PC-9 (cell line): ENCODE measurements at regions of chr3 and their contacts with region 1.

Region 1: GRCh38 chr3:168088106-168088720 is 7.5 kb downstream of the GOLIM4 start:
- DNase-seq: no peak
- H3K4me3 ChIP-seq: no peak overlapping the region
- H3K27ac ChIP-seq: no peak overlapping the region
- H3K4me1 ChIP-seq: 0 out of 2 replicates have a peak, but pooled peaks cover 14% of the 10 kb centered on the region
- H3K27me3 ChIP-seq: no peaks in the 10 kb centered on the region
- CTCF ChIP-seq: no peak; the same call in 1 of the 2 replicates

Region 2: DNA sequence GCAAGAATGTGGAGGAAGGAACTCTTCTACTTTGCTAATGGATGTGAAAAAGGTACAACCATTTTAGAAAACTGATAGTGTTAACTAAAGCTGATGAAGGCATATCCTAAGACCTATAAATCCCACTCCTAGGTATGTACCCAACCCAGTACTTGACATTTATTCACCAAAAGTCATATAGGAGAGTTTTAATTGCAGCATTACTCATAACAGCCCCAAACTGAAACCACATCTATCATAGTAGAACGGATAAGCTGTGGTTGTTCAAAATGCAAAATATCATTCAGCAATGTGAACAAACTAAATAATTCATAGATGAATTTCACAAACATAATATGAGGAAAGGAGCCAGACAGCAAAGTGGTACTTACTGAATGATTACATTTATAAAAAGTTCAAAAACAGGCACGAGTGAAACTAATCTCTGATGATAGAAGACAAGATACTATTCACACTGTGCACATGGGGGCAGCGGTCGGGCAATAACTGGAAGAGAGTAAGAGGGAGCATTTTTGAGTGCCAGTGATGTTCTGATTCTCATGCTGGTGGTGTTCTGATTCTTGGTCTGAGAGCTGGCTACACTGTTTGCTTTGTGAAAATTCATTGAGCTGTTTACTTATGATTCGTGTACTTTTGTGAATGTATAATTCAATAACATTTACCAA is 26.7 kb before region 1 on chr3:
- CTCF ChIA-PET with region 1: interaction called, 4 read pairs
- POLR2A ChIA-PET with region 1: no interaction called
- intact Hi-C with region 1: loop called (anchors 1 kb)
- DNase-seq: no peak
- H3K4me3 ChIP-seq: no peak overlapping the region
- H3K27ac ChIP-seq: no peak overlapping the region
- H3K4me1 ChIP-seq: no peaks in the 10 kb centered on the region
- H3K27me3 ChIP-seq: no peaks in the 10 kb centered on the region
- CTCF ChIP-seq: no peak

Region 3: DNA sequence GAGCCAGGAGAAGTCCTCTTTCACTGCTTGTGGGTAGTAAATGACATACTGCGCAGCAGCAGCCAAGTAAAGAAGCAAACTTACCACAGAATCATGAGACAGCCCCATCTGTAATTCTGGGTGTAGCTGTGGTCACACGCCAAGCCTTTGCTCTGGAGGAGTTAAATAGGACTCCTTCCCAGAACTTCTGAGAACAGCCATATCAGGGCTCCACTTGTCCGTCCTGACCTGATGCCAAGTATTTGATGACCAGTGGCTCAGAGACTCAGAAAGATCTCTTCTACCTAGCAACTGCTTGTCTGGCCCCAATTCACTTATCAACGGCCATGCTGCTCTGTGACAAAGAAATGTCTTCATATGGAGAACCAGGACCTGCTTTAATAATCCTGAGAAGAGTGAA is 28.1 kb after region 1 on chr3:
- CTCF ChIA-PET with region 1: interaction called, 11 read pairs
- POLR2A ChIA-PET with region 1: no interaction called
- intact Hi-C with region 1: no loop called
- DNase-seq: no peak
- H3K4me3 ChIP-seq: no peak overlapping the region
- H3K27ac ChIP-seq: no peak overlapping the region
- H3K4me1 ChIP-seq: no peaks in the 10 kb centered on the region; the same call in 1 of the 2 replicates
- H3K27me3 ChIP-seq: no peaks in the 10 kb centered on the region
- CTCF ChIP-seq: no peak

Region 4: DNA sequence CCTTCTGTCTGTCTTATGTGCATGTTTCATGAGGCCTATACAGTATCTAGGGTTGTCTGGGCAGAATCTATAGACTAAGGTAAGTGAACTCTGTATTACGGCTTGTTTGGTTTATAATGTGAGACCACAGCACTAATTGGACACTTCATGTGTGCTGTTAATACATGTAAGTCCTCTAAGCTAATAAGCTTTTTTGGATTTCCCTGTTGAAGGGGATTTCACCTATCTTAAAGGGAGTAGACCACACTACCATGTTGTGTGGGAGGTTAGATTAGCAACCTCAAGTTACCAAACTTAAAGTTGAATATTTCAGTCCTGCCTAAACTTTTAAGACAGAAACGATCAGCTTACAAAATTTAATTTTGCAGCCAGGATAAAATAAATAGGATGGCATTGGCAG is 197.3 kb after region 1 on chr3:
- CTCF ChIA-PET with region 1: no interaction called
- POLR2A ChIA-PET with region 1: no interaction called
- intact Hi-C with region 1: no loop called
- DNase-seq: no peak
- H3K4me3 ChIP-seq: no peak overlapping the region
- H3K27ac ChIP-seq: no peak overlapping the region
- H3K4me1 ChIP-seq: no peaks in the 10 kb centered on the region
- H3K27me3 ChIP-seq: no peaks in the 10 kb centered on the region
- CTCF ChIP-seq: no peak

Region 5: GRCh38 chr3:169022457-169022856 is 934.2 kb after region 1 on chr3:
- CTCF ChIA-PET with region 1: no interaction called
- POLR2A ChIA-PET with region 1: no interaction called
- intact Hi-C with region 1: no loop called
- DNase-seq: no peak
- H3K4me3 ChIP-seq: no peak overlapping the region
- H3K27ac ChIP-seq: no peak overlapping the region
- H3K4me1 ChIP-seq: peaks cover 31% of the 10 kb centered on the region
- H3K27me3 ChIP-seq: no peaks in the 10 kb centered on the region
- CTCF ChIP-seq: no peak